Activated CD4-positive, alpha-beta T cell treated with anti-CD3 and anti-CD28 coated beads for 36 hours (primary cell): ENCODE measurements at regions of chr9 and their contacts with region 1.

Region 1: GRCh38 chr9:77456829-77457437 is 191.2 kb downstream of the GNA14 start:
- DNase-seq: peak; percentile 92
- ATAC-seq: peak; percentile 83
- H3K4me3 Mint-ChIP-seq: no peak overlapping the region
- H3K27ac Mint-ChIP-seq: no peak overlapping the region
- H3K4me1 Mint-ChIP-seq: peaks cover 22% of the 10 kb centered on the region
- H3K27me3 Mint-ChIP-seq: no peaks in the 10 kb centered on the region

Region 2: GRCh38 chr9:77433675-77434445 is 23.1 kb before region 1 on chr9:
- CTCF ChIA-PET with region 1: interaction called, 85 read pairs
- POLR2A ChIA-PET with region 1: no interaction called
- intact Hi-C with region 1: no loop called
- DNase-seq: peak; percentile 77
- ATAC-seq: peak; percentile 99
- H3K4me3 Mint-ChIP-seq: no peak overlapping the region
- H3K27ac Mint-ChIP-seq: no peak overlapping the region
- H3K4me1 Mint-ChIP-seq: peaks cover 3% of the 10 kb centered on the region
- H3K27me3 Mint-ChIP-seq: no peaks in the 10 kb centered on the region

Region 3: GRCh38 chr9:77469515-77470231 is 12.7 kb after region 1 on chr9:
- CTCF ChIA-PET with region 1: interaction called, 21 read pairs
- POLR2A ChIA-PET with region 1: no interaction called
- intact Hi-C with region 1: no loop called
- DNase-seq: no peak
- ATAC-seq: no peak
- H3K4me3 Mint-ChIP-seq: no peak overlapping the region
- H3K27ac Mint-ChIP-seq: no peak overlapping the region
- H3K4me1 Mint-ChIP-seq: peaks cover under 1% of the 10 kb centered on the region
- H3K27me3 Mint-ChIP-seq: peaks cover 1% of the 10 kb centered on the region

Region 4: DNA sequence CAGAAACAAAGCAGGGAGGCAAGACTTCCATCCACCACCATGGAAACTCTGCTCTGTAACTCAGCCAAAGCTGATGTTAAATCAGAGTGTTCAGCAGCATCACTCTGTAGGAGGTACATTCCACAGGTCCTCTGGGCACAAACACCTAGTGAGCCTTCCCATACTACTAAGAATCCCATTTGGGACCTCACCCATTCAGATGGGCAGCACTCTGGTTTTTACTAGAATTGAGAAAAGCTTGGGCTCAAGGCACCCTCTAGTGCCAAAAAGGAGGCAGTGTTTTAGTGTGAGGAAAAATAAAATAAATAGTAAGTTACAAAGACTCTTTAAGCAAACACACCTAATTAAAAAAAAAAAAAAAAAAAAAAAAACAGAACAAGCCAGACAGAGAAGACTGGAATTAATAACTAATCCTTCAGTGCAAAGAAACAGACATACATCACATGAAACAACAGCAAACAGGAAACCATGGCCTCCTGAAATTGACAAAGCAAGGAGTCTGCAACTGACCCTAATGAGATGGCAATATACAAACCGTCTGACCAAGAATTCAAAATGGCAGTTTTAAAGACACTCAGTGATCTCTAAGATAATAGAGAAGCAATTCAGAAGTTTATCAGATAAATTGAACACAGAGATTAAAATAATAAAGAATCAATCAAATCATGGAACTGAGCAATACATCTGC is 31.6 kb after region 1 on chr9:
- CTCF ChIA-PET with region 1: interaction called, 84 read pairs
- POLR2A ChIA-PET with region 1: no interaction called
- intact Hi-C with region 1: loop called (anchors 1 to 2 kb)
- DNase-seq: no peak
- ATAC-seq: peak; percentile 45
- H3K4me3 Mint-ChIP-seq: peak overlapping the region; percentile 57
- H3K27ac Mint-ChIP-seq: no peak overlapping the region
- H3K4me1 Mint-ChIP-seq: peaks cover 20% of the 10 kb centered on the region
- H3K27me3 Mint-ChIP-seq: peaks cover 3% of the 10 kb centered on the region

Region 5: GRCh38 chr9:77751341-77752091 is 294.6 kb after region 1 on chr9:
- CTCF ChIA-PET with region 1: interaction called, 15 read pairs
- POLR2A ChIA-PET with region 1: no interaction called
- intact Hi-C with region 1: loop called (anchors 1 to 5 kb)
- DNase-seq: peak; percentile 34
- ATAC-seq: peak; percentile 71
- H3K4me3 Mint-ChIP-seq: no peak overlapping the region
- H3K27ac Mint-ChIP-seq: peak overlapping the region; percentile 52
- H3K4me1 Mint-ChIP-seq: peaks cover 39% of the 10 kb centered on the region
- H3K27me3 Mint-ChIP-seq: no peaks in the 10 kb centered on the region